Activated CD4-positive, alpha-beta T cell treated with anti-CD3 and anti-CD28 coated beads for 36 hours (primary cell): ENCODE measurements at regions of chr10 and their contacts with region 1.

Region 1: DNA sequence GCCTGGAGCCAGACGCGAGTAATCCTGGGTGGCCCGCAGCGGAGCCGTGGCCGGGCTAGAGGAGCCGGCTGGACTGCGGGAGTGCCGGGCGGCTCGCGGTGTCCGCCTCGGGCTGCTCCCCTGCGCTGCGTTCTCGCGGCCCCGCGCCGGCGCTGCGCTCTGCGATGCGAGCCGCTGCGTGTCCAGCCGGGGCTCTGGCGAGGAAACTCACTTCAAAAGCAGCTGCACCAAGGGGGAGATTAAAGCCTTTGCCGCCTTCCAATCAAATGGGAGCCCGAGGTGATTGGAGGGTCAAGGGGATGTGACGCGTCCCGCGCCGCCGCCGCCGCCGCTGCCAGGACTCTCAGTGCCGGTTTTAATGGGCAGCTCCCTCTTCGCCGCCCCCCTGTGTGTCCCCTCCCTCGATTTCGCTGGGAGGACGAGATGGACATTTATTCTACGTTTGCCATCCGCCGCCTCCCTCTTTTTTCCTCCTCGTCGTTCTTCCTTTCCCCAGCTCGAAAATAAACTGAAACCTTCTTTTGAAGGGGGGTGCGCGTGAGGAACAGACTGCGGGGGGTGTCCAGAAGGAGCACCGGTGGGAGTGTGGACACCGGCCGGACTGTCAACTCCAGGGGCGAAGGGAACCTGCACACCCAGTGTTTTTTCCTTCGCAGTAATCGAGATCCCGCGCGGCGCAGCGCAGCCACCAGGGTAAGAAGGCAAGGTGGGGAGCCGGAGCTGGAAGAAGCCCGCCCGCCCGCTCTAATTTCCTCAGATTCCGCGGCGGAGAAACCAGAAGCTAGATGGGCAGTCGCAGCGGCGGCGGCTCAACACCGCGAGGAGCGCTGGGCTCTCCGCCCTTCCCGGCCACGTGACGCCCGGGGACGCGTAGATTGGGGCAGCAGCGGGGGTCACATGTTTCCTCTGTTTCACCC is at the start of gene ZNF503:
- DNase-seq: peak; percentile 79
- ATAC-seq: peak; percentile 81
- H3K4me3 Mint-ChIP-seq: peak within 1 kb of the TSS; percentile 74
- H3K27ac Mint-ChIP-seq: no peak within 1 kb of the TSS
- H3K4me1 Mint-ChIP-seq: peaks cover 22% of the 10 kb centered on the region
- H3K27me3 Mint-ChIP-seq: peaks cover 56% of the 10 kb centered on the region
- total RNA-seq, gene ZNF503: 0.40 to 0.46 TPM

Region 2: DNA sequence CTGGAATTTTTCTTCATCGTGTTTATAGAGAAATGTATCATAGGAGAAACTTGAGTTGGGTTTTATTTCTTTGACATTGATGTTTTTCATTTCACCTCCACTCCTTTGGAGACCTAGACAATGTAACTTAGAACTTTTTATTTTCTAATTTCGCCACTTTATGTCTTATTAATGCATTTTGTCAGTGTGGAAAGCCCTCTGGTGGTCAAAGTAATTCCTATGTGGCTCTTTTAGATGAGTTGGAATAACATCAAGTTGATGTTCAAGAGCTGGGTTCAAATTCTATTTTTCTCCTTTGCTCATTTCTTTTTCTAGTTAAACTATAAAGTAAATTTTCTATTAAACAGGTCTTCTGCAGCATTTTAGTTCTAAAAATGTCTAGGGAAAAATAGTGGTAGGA is 508.2 kb after region 1 on chr10:
- CTCF ChIA-PET with region 1: no interaction called
- POLR2A ChIA-PET with region 1: no interaction called
- intact Hi-C with region 1: loop called in 1 of 2 experiments (anchors 10 kb)
- DNase-seq: no peak
- ATAC-seq: no peak
- H3K4me3 Mint-ChIP-seq: no peak overlapping the region
- H3K27ac Mint-ChIP-seq: no peak overlapping the region
- H3K4me1 Mint-ChIP-seq: no peaks in the 10 kb centered on the region
- H3K27me3 Mint-ChIP-seq: peaks cover 8% of the 10 kb centered on the region

Region 3: GRCh38 chr10:76303682-76304316 is 902.0 kb after region 1 on chr10:
- CTCF ChIA-PET with region 1: no interaction called
- POLR2A ChIA-PET with region 1: no interaction called
- intact Hi-C with region 1: loop called in 1 of 2 experiments (anchors 5 kb)
- DNase-seq: peak; percentile 54
- ATAC-seq: peak; percentile 26
- H3K4me3 Mint-ChIP-seq: no peak overlapping the region
- H3K27ac Mint-ChIP-seq: no peak overlapping the region
- H3K4me1 Mint-ChIP-seq: no peaks in the 10 kb centered on the region
- H3K27me3 Mint-ChIP-seq: no peaks in the 10 kb centered on the region

Region 4: GRCh38 chr10:76984559-76985443 is 1583.0 kb after region 1 on chr10:
- CTCF ChIA-PET with region 1: no interaction called
- POLR2A ChIA-PET with region 1: no interaction called
- intact Hi-C with region 1: loop called (anchors 5 to 10 kb)
- DNase-seq: peak; percentile 85
- ATAC-seq: peak; percentile 63
- H3K4me3 Mint-ChIP-seq: no peak overlapping the region
- H3K27ac Mint-ChIP-seq: no peak overlapping the region
- H3K4me1 Mint-ChIP-seq: no peaks in the 10 kb centered on the region
- H3K27me3 Mint-ChIP-seq: no peaks in the 10 kb centered on the region